ENCODE measurements at regions of chr10 and their contacts with region 1.

Region 1: DNA sequence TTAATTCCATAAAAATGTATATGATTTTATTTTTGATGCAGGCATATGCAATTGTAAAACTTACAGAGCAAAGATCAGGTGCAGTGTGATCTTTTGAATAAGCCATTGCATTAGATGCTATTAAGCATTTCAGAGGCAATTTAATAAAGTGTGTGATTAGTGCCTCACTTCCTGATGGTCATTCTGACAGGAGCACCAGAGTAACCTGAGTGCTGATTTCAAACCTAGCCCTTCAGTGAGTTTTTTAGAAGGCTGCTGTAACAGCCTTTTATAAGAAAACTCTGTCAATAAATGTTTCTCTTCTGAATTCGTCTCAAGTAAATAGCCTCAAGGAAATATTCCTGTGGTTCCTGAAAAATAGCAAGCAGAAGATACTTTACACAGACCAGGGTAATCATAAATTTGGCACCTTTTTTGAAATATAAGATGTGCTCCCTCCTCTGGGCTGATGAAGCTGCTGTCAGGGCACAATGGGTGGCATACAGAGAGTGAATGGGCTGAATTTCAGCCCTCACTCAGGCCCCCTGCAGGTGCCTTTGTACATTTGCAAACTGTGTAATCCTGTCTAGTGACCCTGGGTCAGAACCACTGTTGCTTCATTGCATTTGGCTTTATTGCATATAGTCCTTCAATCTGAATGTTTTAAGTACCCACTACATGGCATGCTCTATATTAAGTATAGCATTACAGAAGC is 193.7 kb upstream of the CSTF2T start:
- DNase-seq: peak in 1 of 2 donors; percentile 27
- ATAC-seq: no peak
- H3K4me3 ChIP-seq: no peak overlapping the region
- H3K27ac ChIP-seq: peak overlapping the region in 1 of 2 donors; percentile 28
- H3K4me1 ChIP-seq: peaks cover 3 to 9% of the 10 kb centered on the region in 2 donors
- H3K27me3 ChIP-seq: no peaks in the 10 kb centered on the region

Region 2: GRCh38 chr10:51950371-51950995 is 57.4 kb after region 1 on chr10:
- intact Hi-C with region 1: loop called in 1 of 2 experiments (anchors 10 kb)
- DNase-seq: peak; percentile 54 to 69
- ATAC-seq: peak; percentile 87
- H3K4me3 ChIP-seq: no peak overlapping the region
- H3K27ac ChIP-seq: peak overlapping the region; percentile 19 to 54
- H3K4me1 ChIP-seq: peaks cover 0 to 3% of the 10 kb centered on the region in 2 donors
- H3K27me3 ChIP-seq: no peaks in the 10 kb centered on the region